ENCODE measurements at regions of chr2 and their contacts with region 1.

Region 1: DNA sequence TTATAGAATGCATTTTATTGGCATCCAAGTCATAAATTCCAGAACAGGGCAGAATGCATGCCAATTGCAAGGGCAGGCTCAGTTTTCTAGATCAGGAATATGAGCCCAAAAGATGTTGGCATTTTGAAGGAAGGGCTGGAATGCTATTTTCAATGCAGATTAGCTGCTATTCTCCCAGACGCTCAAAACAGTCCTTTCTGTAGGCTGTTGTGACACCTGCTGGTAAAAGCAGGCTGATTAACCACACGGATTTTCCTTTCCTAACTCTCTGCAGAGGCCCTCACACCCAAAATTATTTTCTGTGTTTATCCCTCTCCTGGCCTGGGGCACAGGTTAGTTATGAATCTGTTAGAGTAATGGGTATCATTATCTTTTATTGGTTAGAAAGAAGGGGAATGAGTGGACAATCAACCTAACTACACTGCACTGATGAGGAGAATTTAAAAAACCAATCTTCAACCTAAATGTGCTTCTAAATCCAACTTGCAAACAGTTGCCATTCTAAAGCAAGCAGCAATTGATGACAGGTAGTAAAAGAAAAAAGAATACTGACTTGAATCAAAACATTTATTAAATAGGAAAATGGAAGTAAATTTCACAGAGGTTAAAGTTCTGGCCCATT is 94.0 kb downstream of the PLA2R1 start:
- DNase-seq: peak; percentile 38
- H3K4me3 Mint-ChIP-seq: no peak overlapping the region
- H3K27ac Mint-ChIP-seq: no peak overlapping the region
- H3K4me1 Mint-ChIP-seq: peaks cover 2% of the 10 kb centered on the region
- H3K27me3 Mint-ChIP-seq: no peaks in the 10 kb centered on the region

Region 2: DNA sequence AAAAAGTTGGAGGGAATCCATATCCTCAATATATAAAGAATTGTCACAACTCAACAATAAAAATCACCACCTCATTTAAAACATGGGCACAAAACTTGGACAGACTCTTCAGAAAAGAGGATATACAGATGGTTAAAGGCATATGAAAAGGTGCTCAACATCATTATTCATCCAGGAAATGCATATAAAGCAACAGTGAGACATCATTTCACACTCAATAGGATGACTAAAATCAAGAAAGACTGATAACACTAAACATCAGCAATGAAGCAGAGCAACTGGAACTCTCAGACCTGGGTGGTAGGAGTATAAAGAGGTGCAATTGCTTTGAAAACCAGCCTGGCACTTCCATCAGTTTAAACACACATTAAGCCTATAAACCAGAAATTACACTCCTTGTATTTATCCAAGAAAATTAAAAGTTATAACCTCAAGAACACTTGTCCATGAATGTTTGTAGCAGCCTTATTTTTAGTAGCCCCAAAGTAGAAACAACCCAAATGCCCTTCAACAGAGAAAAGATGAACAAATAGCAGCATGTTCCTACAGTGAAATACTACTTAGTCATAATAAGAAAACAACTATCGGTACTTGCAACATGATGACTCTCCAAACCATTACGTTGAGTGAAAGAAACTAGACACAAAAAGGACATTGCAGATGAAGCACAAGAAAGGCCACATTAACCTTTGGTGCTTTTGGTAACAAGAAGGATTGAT is 1079.1 kb before region 1 on chr2:
- CTCF ChIA-PET with region 1: no interaction called
- POLR2A ChIA-PET with region 1: no interaction called
- intact Hi-C with region 1: loop called (anchors 5 kb)
- DNase-seq: no peak
- H3K4me3 Mint-ChIP-seq: no peak overlapping the region
- H3K27ac Mint-ChIP-seq: no peak overlapping the region
- H3K4me1 Mint-ChIP-seq: peaks cover 10% of the 10 kb centered on the region
- H3K27me3 Mint-ChIP-seq: peaks cover 9% of the 10 kb centered on the region

Region 3: DNA sequence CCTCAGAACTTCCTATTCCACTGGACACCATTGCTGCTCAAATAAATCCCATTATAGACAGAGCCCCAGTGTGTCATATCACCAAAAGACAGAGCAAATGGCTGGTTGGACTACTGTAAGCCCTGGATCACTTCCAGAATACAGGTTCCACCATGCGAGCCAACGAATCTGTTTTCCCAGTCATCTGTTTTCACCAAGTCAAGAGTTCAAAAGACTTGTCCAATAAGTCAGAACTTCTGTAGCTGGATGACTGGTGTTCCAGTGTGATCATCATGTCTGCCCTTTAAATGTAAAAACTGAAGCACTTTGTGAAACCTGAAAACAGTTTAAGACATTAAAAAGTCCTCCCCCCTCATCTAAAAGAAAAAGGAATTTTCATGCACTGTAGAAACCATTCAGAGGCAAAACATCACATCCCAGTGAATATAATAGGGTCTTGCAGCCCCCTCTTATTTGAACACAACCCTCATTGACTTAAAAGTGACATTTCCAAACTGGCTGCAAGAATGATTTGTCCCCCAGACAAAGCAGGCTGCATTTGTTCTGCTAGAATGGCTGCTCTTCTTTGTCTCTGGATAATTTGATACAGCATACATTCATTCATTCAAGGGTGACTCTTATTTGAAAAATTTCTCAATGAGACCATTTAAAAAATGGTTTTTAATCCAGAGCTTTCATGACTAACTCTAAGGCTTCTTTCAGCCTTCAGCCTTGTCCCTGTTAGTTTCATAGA is 1064.5 kb before region 1 on chr2:
- CTCF ChIA-PET with region 1: no interaction called
- POLR2A ChIA-PET with region 1: no interaction called
- intact Hi-C with region 1: loop called (anchors 5 kb)
- DNase-seq: no peak
- H3K4me3 Mint-ChIP-seq: no peak overlapping the region
- H3K27ac Mint-ChIP-seq: no peak overlapping the region
- H3K4me1 Mint-ChIP-seq: no peaks in the 10 kb centered on the region
- H3K27me3 Mint-ChIP-seq: no peaks in the 10 kb centered on the region

Region 4: GRCh38 chr2:159615140-159615951 is 353.0 kb before region 1 on chr2:
- CTCF ChIA-PET with region 1: no interaction called
- POLR2A ChIA-PET with region 1: no interaction called
- intact Hi-C with region 1: loop called (anchors 10 kb)
- DNase-seq: peak; percentile 50
- H3K4me3 Mint-ChIP-seq: peak overlapping the region; percentile 82
- H3K27ac Mint-ChIP-seq: no peak overlapping the region
- H3K4me1 Mint-ChIP-seq: peaks cover 8% of the 10 kb centered on the region
- H3K27me3 Mint-ChIP-seq: peaks cover 18% of the 10 kb centered on the region